ENCODE measurements at regions of chr16 and their contacts with region 1.

Region 1: DNA sequence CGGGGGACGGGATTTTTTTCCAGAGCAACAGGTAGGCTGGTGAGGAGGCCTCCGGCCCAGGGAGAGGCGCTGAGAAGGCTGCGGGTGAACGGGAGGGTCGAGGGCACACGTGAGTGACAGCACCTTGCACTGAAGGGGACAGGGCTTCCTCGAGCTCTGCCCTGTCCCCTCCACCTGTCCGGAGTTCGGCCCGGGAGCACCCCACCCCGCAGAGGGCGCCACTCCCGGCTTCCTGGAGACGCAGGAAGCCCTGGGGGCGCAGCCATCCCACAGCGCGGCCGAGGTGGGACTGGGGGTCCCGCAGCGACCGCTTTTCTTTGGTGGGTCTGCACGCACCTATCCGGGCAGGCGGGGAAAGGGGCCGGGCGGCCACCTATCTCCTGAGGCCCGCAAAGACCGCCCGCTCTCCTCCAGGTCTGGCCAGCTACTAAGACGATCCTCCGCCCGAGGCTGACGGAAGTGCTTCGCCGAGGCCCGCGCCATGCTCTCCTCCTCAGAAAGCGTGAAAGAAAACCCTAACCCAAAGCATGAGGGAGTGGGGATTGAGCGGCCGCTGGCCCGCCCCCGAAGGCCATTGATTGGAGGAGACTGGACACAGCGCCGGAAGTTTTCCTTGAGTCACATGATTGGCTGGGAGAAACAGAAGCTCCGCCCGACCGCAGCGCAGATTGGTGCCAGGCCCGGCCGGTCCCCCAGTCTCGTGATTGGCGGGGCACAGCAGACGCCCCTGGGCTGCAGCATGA is 34.3 kb downstream of the DDX19A start:
- DNase-seq: peak; percentile 94 to 97
- H3K4me3 ChIP-seq: peak overlapping the region; percentile 75 to 94 (median 86)
- H3K27ac ChIP-seq: peak overlapping the region; percentile 79; the same call in 1 of the 2 replicates
- H3K4me1 ChIP-seq: peaks cover 0 to 3% (median 0%) of the 10 kb centered on the region in 4 experiments; a peak in 2 of 7 replicates
- H3K27me3 ChIP-seq: no peaks in the 10 kb centered on the region
- CTCF ChIP-seq: peak in 2 of 3 experiments; percentile 25 to 32; a peak in 3 of 4 replicates
- EP300 ChIP-seq: no peak
- POLR2A ChIP-seq: peak; percentile 91 to 96
- RAD21 ChIP-seq: peak in 1 of 2 experiments; percentile 20; a peak in 1 of 4 replicates

Region 2: GRCh38 chr16:70289229-70290098 is 91.6 kb before region 1 on chr16 and contains the start of gene AARS1:
- CTCF ChIA-PET with region 1: no interaction called
- POLR2A ChIA-PET with region 1: interaction called, 15 read pairs
- DNase-seq: peak; percentile 96 to 98
- H3K4me3 ChIP-seq: peak within 1 kb of the TSS; percentile 84 to 96 (median 92)
- H3K27ac ChIP-seq: peak within 1 kb of the TSS; percentile 97
- H3K4me1 ChIP-seq: peaks cover 0 to 3% (median 0%) of the 10 kb centered on the region in 4 experiments; a peak in 3 of 7 replicates
- H3K27me3 ChIP-seq: no peaks in the 10 kb centered on the region
- CTCF ChIP-seq: no peak
- EP300 ChIP-seq: peak in 1 of 2 experiments; percentile 43; a peak in 1 of 3 replicates
- POLR2A ChIP-seq: peak; percentile 97
- RAD21 ChIP-seq: no peak
- total RNA-seq, gene AARS1: 231 and 235 TPM in 2 replicates

Region 3: DNA sequence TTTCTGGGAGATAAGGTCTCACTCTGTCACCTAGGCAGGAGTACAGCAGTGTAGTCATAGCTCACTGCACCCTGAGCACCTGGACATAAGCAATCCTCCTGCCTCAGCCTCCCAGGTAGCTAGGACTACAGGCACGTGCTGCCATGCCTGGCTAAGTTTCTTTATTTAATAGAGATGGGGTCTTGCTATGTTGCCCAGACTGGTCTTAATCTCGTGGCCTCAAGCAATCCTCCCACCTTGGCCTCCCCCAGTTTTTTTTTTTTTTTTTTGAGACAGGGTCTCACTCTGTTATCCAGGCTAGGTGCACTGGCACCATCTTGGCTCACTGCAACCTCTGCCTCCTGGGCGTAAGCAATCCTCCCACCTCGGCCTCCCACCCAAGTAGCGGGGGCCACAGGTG is 60.9 kb before region 1 on chr16:
- CTCF ChIA-PET with region 1: no interaction called
- POLR2A ChIA-PET with region 1: no interaction called
- DNase-seq: no peak
- H3K4me3 ChIP-seq: no peak overlapping the region
- H3K27ac ChIP-seq: no peak overlapping the region
- H3K4me1 ChIP-seq: no peaks in the 10 kb centered on the region
- H3K27me3 ChIP-seq: no peaks in the 10 kb centered on the region
- CTCF ChIP-seq: no peak
- EP300 ChIP-seq: no peak
- POLR2A ChIP-seq: no peak
- RAD21 ChIP-seq: no peak

Region 4: DNA sequence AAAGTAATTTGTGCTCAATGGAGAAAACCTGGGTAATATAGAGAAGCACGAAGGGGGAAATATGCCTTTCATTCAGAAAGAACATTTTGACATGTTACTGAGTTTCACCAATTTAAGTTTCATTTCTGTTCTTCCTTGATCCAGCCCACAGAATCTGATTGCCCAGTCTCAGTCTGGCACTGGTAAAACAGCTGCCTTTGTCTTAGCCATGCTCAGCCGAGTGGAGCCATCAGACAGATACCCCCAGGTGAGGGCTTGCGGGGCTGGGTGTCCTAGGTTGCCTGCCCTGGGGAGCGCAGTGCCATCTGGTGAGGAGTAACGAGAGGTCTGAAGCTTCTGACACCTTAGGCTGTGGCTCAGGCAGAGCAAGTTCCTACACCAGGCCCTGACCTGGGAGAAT is 16.6 kb before region 1 on chr16:
- CTCF ChIA-PET with region 1: interaction called, 23 read pairs
- POLR2A ChIA-PET with region 1: interaction called, 30 read pairs
- DNase-seq: no peak
- H3K4me3 ChIP-seq: no peak overlapping the region
- H3K27ac ChIP-seq: no peak overlapping the region; the same call in 1 of the 2 replicates
- H3K4me1 ChIP-seq: no peaks in the 10 kb centered on the region
- H3K27me3 ChIP-seq: no peaks in the 10 kb centered on the region
- CTCF ChIP-seq: no peak
- EP300 ChIP-seq: no peak
- POLR2A ChIP-seq: no peak
- RAD21 ChIP-seq: no peak

Region 5: DNA sequence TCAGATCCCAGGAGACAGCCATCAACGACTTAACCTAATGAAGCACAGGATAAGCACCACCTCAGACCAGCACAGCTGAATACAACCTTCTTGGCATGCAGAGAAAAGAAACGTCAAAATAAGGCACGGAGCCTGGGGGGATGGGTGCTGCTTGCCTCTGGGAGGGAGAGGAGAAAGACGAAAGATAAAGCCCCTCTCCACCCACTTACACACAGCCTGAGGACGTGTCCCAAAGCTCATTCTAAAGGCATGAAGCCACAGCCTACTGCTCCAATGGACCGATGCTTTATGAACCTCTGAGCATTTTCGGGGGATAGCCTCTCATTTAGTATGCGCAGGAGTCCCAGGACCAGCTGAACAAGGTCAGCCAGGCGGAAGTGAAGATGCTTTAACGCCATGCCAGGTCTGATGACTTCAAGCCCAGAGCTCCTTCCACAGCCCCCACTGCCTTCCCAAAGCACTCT is 26.8 kb after region 1 on chr16:
- CTCF ChIA-PET with region 1: no interaction called
- POLR2A ChIA-PET with region 1: interaction called, 15 read pairs
- DNase-seq: no peak
- H3K4me3 ChIP-seq: no peak overlapping the region
- H3K27ac ChIP-seq: no peak overlapping the region
- H3K4me1 ChIP-seq: peaks cover 2 to 11% (median 7%) of the 10 kb centered on the region in 4 experiments
- H3K27me3 ChIP-seq: no peaks in the 10 kb centered on the region
- CTCF ChIP-seq: no peak
- EP300 ChIP-seq: no peak
- POLR2A ChIP-seq: no peak
- RAD21 ChIP-seq: no peak

Region 6: DNA sequence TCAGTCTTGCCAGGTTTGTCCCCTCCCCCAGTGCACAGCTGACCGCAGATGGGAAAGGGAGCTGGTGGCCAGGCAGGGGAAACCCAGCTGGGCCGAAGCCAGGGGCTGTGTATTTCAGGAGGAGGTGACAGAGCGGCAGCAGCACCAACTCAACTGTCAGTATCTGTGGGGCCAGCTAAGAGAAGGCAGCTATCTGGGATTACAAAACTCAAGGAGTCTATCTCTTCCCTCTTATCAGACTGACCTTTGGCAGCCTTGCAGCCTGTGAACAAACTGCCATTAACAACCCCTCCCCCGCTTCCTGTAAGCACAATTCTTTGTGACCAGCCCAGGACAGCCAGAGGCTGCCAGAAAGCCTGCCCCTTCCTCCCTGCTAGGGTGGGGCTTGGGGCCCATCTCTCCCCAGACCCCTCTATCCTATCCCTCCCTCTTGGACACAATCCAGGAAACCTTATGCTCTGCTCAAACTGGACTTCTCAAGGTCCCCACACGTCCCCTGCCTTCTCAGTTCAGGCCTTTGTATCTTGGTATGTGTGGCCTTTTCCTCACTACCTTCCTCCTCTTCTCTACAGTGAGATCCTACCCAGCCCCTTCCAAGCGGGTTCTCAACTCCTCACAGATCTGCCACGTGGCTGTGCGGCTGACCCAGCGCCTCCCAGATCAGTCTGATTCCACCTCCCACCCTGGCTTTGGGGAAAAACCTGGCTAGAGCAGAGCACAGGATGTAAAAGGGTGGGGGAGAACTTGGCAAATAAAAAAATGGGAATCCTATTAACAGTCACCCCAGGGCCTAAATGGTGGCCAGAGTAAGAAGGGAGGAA is 47.4 kb after region 1 on chr16:
- CTCF ChIA-PET with region 1: no interaction called
- POLR2A ChIA-PET with region 1: interaction called, 17 read pairs
- DNase-seq: peak in 1 of 2 experiments; percentile 68
- H3K4me3 ChIP-seq: peak overlapping the region in 2 of 4 experiments; percentile 11 to 27; a peak in 3 of 8 replicates
- H3K27ac ChIP-seq: peak overlapping the region; percentile 70
- H3K4me1 ChIP-seq: peaks cover 29 to 40% (median 34%) of the 10 kb centered on the region in 4 experiments
- H3K27me3 ChIP-seq: no peaks in the 10 kb centered on the region
- CTCF ChIP-seq: no peak
- EP300 ChIP-seq: peak in 1 of 2 experiments; percentile 6; a peak in 1 of 3 replicates
- POLR2A ChIP-seq: peak in 1 of 2 experiments; percentile 56; a peak in 1 of 3 replicates
- RAD21 ChIP-seq: 0 out of 4 replicates have a peak, but pooled peaks of 1 of the 2 experiments have one; percentile 0

Region 7: GRCh38 chr16:70454222-70455034 is 73.4 kb after region 1 on chr16 and contains the start of gene FCSK:
- CTCF ChIA-PET with region 1: interaction called, 4 read pairs
- POLR2A ChIA-PET with region 1: interaction called, 37 read pairs
- DNase-seq: peak in 1 of 2 experiments; percentile 89
- H3K4me3 ChIP-seq: peak within 1 kb of the TSS; percentile 44 to 83 (median 78)
- H3K27ac ChIP-seq: peak within 1 kb of the TSS; percentile 100
- H3K4me1 ChIP-seq: peaks cover 0 to 2% (median 0%) of the 10 kb centered on the region in 4 experiments; a peak in 1 of 7 replicates
- H3K27me3 ChIP-seq: no peaks in the 10 kb centered on the region
- CTCF ChIP-seq: peak; percentile 46 to 62 (median 47); a peak in 3 of 4 replicates
- EP300 ChIP-seq: no peak
- POLR2A ChIP-seq: peak in 1 of 2 experiments; percentile 57; a peak in 2 of 3 replicates
- RAD21 ChIP-seq: peak in 1 of 2 experiments; percentile 36; a peak in 2 of 4 replicates
- total RNA-seq, gene FCSK: 3.4 and 4.6 TPM in 2 replicates

Region 8: GRCh38 chr16:70523076-70523742 is 142.2 kb after region 1 on chr16 and contains the start of gene COG4:
- CTCF ChIA-PET with region 1: interaction called, 3 read pairs
- POLR2A ChIA-PET with region 1: interaction called, 35 read pairs
- DNase-seq: peak; percentile 59 to 88
- H3K4me3 ChIP-seq: peak within 1 kb of the TSS; percentile 88 to 96 (median 91)
- H3K27ac ChIP-seq: peak within 1 kb of the TSS; percentile 91
- H3K4me1 ChIP-seq: peaks cover 0 to 4% (median 3%) of the 10 kb centered on the region in 4 experiments; a peak in 5 of 7 replicates
- H3K27me3 ChIP-seq: no peaks in the 10 kb centered on the region
- CTCF ChIP-seq: no peak
- EP300 ChIP-seq: no peak
- POLR2A ChIP-seq: peak in 1 of 2 experiments; percentile 36; a peak in 2 of 3 replicates
- RAD21 ChIP-seq: no peak
- total RNA-seq, gene COG4: 46.1 and 52.2 TPM in 2 replicates